GM12878 (cell line): ENCODE measurements at regions of chr1 and their contacts with region 1.

Region 1: DNA sequence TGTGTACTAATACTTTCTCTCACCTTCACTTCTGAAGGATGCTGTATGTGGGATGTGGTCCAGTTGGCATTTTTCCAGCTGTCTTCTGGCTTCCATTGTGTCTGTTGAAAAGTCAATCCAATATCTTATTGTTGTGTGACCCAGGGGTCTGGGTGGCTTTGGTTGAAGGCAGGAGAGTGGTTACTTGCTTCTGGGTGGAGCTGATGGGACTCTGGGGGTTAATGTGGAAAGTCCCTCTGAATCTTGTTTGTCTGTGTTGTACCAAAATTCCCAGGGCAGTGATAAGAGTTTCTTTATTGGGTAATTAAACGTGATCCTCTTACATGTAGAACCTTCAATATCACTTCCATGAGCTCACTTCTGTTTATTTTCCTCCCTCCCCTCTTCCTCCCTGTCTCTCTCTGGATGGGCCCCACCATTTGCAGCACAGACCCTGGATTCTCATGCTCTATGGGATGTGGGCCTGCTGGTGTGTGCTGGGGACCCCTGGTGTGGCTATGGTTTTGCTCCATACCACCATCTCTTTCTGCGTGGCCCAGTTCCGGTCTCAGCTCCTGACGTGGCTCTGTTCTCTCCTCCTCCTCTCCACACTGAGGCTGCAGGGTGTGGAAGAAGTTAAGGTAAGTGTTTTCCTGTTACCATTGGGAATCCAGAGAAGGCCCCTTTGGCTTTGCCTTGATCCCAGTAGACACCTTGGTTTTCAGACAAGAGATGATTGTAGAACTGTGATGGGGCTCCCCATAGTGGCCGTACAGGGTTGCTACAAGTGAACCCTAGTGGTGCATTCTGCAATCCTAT is 71.5 kb downstream of the HHAT start:
- DNase-seq: peak; percentile 74
- ATAC-seq: peak; percentile 83
- H3K4me3 ChIP-seq: no peak overlapping the region
- H3K27ac ChIP-seq: peak overlapping the region; percentile 9; the same call in 1 of the 2 replicates
- H3K4me1 ChIP-seq: no peaks in the 10 kb centered on the region
- H3K27me3 ChIP-seq: no peaks in the 10 kb centered on the region
- CTCF ChIP-seq: peak; percentile 85 to 92 (median 85)
- EP300 ChIP-seq: no peak; a peak in 1 of 4 replicates
- POLR2A ChIP-seq: no peak
- RAD21 ChIP-seq: peak; percentile 89

Region 2: GRCh38 chr1:210143465-210144062 is 256.7 kb before region 1 on chr1:
- CTCF ChIA-PET with region 1: interaction called, 36 read pairs
- POLR2A ChIA-PET with region 1: no interaction called
- RAD21 ChIA-PET with region 1: interaction called, 9 read pairs
- SMC1A ChIA-PET with region 1: interaction called, 8 read pairs
- in situ Hi-C with region 1: no loop called
- intact Hi-C with region 1: loop called (anchors 1 kb)
- DNase-seq: no peak
- ATAC-seq: peak; percentile 61
- H3K4me3 ChIP-seq: no peak overlapping the region
- H3K27ac ChIP-seq: no peak overlapping the region
- H3K4me1 ChIP-seq: no peaks in the 10 kb centered on the region
- H3K27me3 ChIP-seq: no peaks in the 10 kb centered on the region
- CTCF ChIP-seq: peak; percentile 31 to 71 (median 46); a peak in 5 of 6 replicates
- EP300 ChIP-seq: no peak
- POLR2A ChIP-seq: no peak
- RAD21 ChIP-seq: peak; percentile 71

Region 3: DNA sequence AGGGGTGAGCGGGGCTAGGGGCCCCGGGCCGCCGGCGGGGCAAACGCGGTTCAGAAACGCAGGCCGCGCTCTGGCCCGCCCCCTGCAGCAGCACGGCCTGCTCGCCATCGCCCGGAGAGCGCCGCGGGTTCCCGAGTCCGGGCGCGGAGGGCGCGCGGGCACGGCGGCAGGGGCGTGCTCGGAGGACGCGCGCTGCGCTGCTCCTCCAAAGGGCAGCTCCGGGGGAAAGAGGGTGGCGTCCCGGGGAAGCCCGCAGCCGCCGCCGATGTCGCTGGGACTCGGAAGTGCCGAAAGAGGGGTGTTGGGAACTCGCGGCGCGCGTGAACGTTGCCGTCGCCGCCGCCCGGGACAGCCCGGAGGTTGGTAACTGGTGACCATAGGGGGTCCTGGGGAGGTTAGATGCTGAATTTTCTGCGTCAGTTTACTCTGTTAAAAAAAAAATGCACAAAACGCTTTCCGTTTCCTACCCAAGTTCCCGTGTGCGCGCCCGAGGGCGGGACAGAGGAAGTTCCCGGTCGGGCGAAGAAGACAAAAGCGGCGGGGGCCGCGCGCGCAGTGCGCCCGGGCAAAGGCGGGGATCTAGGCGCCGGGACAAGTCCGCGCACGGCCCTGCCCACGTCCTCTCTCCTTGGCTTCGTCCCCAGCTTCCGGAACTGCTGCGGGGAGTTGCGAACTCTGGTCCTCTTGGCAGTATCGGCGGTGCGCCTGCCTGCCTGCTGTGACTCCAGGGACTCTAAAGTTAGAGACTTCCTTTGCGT is 71.3 kb before region 1 on chr1 and contains the start of gene HHAT:
- CTCF ChIA-PET with region 1: interaction called, 22 read pairs
- POLR2A ChIA-PET with region 1: interaction called, 13 read pairs
- RAD21 ChIA-PET with region 1: interaction called, 69 read pairs
- SMC1A ChIA-PET with region 1: interaction called, 18 read pairs
- in situ Hi-C with region 1: no loop called
- intact Hi-C with region 1: loop called (anchors 2 kb)
- DNase-seq: no peak
- ATAC-seq: peak; percentile 84
- H3K4me3 ChIP-seq: peak within 1 kb of the TSS; percentile 77
- H3K27ac ChIP-seq: peak within 1 kb of the TSS; percentile 73
- H3K4me1 ChIP-seq: peaks cover 29% of the 10 kb centered on the region
- H3K27me3 ChIP-seq: no peaks in the 10 kb centered on the region
- CTCF ChIP-seq: peak in 1 of 3 experiments; percentile 12; a peak in 1 of 6 replicates
- EP300 ChIP-seq: no peak
- POLR2A ChIP-seq: peak; percentile 82
- RAD21 ChIP-seq: no peak
- polyA plus RNA-seq, gene HHAT: 1.2 to 1.5 TPM

Region 4: GRCh38 chr1:210360852-210361477 is 39.3 kb before region 1 on chr1:
- CTCF ChIA-PET with region 1: interaction called, 290 read pairs
- POLR2A ChIA-PET with region 1: interaction called, 13 read pairs
- RAD21 ChIA-PET with region 1: interaction called, 181 read pairs
- SMC1A ChIA-PET with region 1: interaction called, 286 read pairs
- in situ Hi-C with region 1: no loop called
- intact Hi-C with region 1: loop called (anchors 1 kb)
- DNase-seq: no peak
- ATAC-seq: peak; percentile 96
- H3K4me3 ChIP-seq: no peak overlapping the region
- H3K27ac ChIP-seq: no peak overlapping the region
- H3K4me1 ChIP-seq: no peaks in the 10 kb centered on the region
- H3K27me3 ChIP-seq: no peaks in the 10 kb centered on the region
- CTCF ChIP-seq: peak; percentile 44 to 71 (median 57)
- EP300 ChIP-seq: peak in 1 of 2 experiments; percentile 36; a peak in 1 of 4 replicates
- POLR2A ChIP-seq: no peak
- RAD21 ChIP-seq: peak; percentile 64

Region 5: GRCh38 chr1:210418863-210419650 is 18.8 kb after region 1 on chr1:
- CTCF ChIA-PET with region 1: interaction called, 8 read pairs
- POLR2A ChIA-PET with region 1: no interaction called
- RAD21 ChIA-PET with region 1: interaction called, 5 read pairs
- SMC1A ChIA-PET with region 1: interaction called, 19 read pairs
- in situ Hi-C with region 1: no loop called
- intact Hi-C with region 1: no loop called
- DNase-seq: no peak
- ATAC-seq: no peak
- H3K4me3 ChIP-seq: no peak overlapping the region
- H3K27ac ChIP-seq: no peak overlapping the region
- H3K4me1 ChIP-seq: no peaks in the 10 kb centered on the region
- H3K27me3 ChIP-seq: no peaks in the 10 kb centered on the region
- CTCF ChIP-seq: no peak
- EP300 ChIP-seq: no peak
- POLR2A ChIP-seq: no peak
- RAD21 ChIP-seq: no peak

Region 6: DNA sequence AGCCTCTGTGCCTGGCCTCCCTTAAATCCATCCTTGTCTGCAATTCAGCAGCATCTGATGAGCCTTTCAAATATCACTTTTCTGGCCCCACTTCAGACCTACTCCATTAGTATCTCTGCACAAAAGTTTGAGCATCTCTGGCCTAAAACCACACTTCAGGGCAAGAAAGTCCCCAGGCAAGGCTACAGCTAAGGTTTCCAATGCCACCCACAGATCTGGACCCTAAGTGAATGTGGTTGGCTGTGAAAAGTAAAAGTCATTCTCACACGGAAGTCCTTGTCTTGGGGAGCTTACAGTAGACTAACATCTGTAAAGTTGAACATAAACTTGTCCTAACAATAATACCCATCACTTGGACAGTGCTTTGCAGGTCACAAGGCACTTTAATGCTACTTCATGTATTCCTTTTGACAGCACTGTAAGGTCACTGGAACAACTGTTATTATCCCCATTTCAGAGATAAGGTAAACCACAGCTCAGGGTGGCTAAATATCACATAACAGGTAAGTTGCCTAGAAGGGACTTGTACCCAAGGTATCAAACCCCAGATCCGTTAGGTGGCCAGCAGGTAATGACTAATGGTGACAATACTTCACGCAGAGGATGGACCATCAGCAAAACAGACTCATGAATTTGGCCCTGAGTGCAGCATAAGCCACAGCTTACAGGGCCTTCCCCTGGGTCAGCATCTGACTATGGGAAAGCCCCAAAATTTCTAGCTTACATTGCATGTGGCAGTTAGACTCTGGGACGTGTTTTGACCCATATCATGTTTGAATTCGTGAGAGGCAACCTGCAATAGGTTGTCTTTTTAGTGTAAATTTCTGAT is 284.4 kb after region 1 on chr1:
- CTCF ChIA-PET with region 1: no interaction called
- POLR2A ChIA-PET with region 1: no interaction called
- RAD21 ChIA-PET with region 1: interaction called, 4 read pairs
- SMC1A ChIA-PET with region 1: interaction called, 3 read pairs
- in situ Hi-C with region 1: no loop called
- intact Hi-C with region 1: loop called (anchors 10 kb)
- DNase-seq: peak; percentile 51
- ATAC-seq: peak; percentile 96
- H3K4me3 ChIP-seq: no peak overlapping the region
- H3K27ac ChIP-seq: peak overlapping the region; percentile 70
- H3K4me1 ChIP-seq: peaks cover 19% of the 10 kb centered on the region
- H3K27me3 ChIP-seq: no peaks in the 10 kb centered on the region
- CTCF ChIP-seq: no peak
- EP300 ChIP-seq: no peak
- POLR2A ChIP-seq: no peak
- RAD21 ChIP-seq: no peak